Stomach (tissue), 19 donors: ENCODE measurements at regions of chr6 and their contacts with region 1.

Region 1: GRCh38 chr6:111263837-111264236 is 176.5 kb downstream of the SLC16A10 start:
- DNase-seq: no peak
- H3K4me3 ChIP-seq: no peak overlapping the region
- H3K27ac ChIP-seq: no peak overlapping the region
- H3K4me1 ChIP-seq: peaks cover 13 to 37% (median 23%) of the 10 kb centered on the region in 4 donors
- H3K27me3 ChIP-seq: no peaks in the 10 kb centered on the region
- CTCF ChIP-seq: no peak
- EP300 ChIP-seq: no peak
- POLR2A ChIP-seq: no peak

Region 2: DNA sequence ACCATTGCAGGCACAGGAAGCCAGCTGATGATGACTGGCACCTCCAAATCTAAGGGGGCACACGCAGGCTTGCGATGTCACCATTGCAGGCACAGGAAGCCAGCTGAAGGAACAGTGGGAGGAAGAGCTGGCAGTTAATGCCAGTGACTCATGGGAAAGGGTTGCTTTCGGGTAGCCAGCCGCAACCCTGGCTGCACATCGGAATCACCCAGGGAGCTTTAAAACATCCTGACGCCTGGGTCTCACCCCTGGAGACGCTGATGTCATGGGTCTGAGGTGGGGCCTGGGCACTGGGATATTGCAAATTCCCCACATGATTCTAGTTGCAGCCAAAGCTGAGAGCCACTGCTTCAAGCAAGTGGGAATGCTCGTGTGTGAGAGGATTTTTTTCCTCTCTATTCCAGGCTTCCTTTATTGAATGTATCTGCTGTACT is 774.0 kb after region 1 on chr6:
- intact Hi-C with region 1: loop called (anchors 10 kb)
- DNase-seq: peak in 1 of 2 donors; percentile 28
- H3K4me3 ChIP-seq: no peak overlapping the region
- H3K27ac ChIP-seq: peak overlapping the region in 4 of 5 donors; percentile 40 to 81 (median 54)
- H3K4me1 ChIP-seq: peaks cover 0 to 14% (median 7%) of the 10 kb centered on the region in 4 donors
- H3K27me3 ChIP-seq: no peaks in the 10 kb centered on the region
- CTCF ChIP-seq: no peak
- EP300 ChIP-seq: no peak
- POLR2A ChIP-seq: no peak